Thyroid gland (tissue), 4 donors: ENCODE measurements at regions of chr7 and their contacts with region 1.

Region 1: DNA sequence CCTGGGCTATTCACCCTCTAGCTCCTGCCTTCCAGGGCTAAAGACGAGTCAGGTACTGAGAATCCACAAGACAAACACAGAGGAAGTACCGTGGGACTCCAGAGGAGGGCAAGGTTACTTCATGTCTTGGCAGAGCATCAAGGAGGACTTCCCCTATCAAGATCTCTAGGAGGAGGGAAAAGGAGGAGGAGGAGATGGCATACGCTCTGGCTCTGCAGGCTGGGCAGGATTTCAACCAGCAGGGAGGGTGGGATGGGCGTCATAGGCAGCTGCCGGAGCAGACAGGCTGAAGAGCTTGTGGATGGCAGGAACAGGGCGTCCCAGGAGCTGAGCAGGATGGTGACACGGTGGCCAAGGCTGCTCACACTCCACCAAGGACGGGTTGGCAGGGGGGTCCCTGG is 21.3 kb downstream of the MDH2 start:
- DNase-seq: peak; percentile 94 to 96
- H3K4me3 ChIP-seq: no peak overlapping the region
- H3K27ac ChIP-seq: peak overlapping the region; percentile 67 to 76 (median 68)
- H3K4me1 ChIP-seq: peaks cover 5 to 13% of the 10 kb centered on the region in 2 donors
- H3K27me3 ChIP-seq: no peaks in the 10 kb centered on the region
- CTCF ChIP-seq: peak in 4 of 6 experiments; percentile 51 to 71 (median 68)
- POLR2A ChIP-seq: peak in 1 of 2 donors; percentile 18

Region 2: GRCh38 chr7:76133164-76133775 is 64.0 kb after region 1 on chr7:
- intact Hi-C with region 1: loop called (anchors 10 kb)
- DNase-seq: no peak
- H3K4me3 ChIP-seq: no peak overlapping the region
- H3K27ac ChIP-seq: no peak overlapping the region
- H3K4me1 ChIP-seq: no peaks in the 10 kb centered on the region
- H3K27me3 ChIP-seq: no peaks in the 10 kb centered on the region
- CTCF ChIP-seq: no peak
- POLR2A ChIP-seq: no peak